ENCODE measurements at regions of chr4 and their contacts with region 1.

Region 1: DNA sequence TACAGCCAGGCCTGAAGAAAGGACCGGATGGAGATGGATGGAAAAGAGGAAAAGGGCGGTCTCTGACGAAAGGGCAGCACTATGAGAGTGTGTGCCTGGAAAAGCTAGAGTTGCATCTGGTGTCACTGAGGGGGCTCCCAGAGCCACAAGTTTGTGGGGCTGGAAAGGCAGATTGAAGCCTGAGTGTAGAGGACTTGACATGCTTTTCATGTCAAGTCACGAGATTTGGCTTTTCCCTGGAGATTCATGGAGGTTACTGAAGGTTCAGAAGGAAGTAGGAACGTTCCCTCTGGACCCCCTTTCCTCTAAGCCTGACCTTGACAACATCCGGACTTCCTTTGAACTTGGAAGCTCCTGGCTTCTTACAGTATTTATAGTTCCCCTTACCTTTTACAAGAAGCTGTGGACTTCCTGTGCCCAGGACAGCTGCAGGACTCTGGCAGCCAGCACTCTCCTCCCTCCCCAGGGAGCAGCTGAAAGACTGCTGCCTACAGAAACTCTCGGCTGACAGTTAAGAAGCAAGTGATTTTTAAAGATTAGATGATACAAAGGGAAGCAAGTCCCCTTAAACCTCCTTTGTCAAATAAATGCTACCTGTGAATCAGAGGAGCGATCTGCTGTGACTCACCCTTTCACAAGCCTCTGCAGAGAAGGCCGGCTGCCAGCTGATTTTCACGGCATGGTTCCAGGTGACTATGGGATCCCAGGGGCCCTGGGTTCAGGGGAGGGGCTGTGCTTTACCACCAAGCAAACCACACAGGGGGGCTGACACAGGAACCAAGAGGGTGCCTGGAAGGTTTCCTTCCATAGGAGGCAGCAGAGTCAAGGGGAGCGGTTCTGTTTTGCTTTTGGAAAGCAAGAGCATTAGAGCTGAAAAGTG is 72.9 kb upstream of the STIM2 start:
- DNase-seq: peak; percentile 59
- H3K4me3 Mint-ChIP-seq: no peak overlapping the region
- H3K27ac Mint-ChIP-seq: no peak overlapping the region
- H3K4me1 Mint-ChIP-seq: peaks cover 14% of the 10 kb centered on the region
- H3K27me3 Mint-ChIP-seq: no peaks in the 10 kb centered on the region

Region 2: DNA sequence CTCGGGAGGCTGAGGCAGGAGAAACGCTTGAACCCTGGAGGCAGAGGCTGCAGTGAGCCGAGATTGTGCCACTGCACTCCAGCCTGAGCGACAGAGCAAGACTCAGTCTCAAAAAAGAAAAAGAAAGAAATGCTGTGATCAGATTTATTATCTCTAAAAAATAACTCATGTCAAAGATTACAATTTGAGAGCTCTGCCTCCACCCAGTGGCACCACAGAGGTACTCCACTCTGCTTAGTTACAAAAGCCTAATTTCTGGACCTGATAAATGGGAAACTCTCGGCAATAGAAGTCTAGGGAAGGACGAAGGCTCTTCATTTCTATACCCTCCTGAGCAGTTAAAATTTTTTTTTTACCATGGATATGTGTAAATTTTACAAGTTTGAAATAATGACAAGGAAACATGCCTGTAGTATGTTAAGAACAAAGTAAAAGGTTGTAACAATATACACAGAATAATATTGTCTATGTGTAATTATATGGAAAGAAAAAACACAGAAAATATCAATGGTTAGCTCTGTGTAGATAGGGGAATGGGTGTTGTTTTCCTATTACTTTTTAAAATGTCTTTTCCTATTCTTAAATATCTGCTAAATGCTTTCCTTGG is 222.7 kb after region 1 on chr4:
- CTCF ChIA-PET with region 1: no interaction called
- POLR2A ChIA-PET with region 1: no interaction called
- intact Hi-C with region 1: loop called (anchors 1 kb)
- DNase-seq: peak; percentile 67
- H3K4me3 Mint-ChIP-seq: no peak overlapping the region
- H3K27ac Mint-ChIP-seq: no peak overlapping the region
- H3K4me1 Mint-ChIP-seq: peaks cover 18% of the 10 kb centered on the region
- H3K27me3 Mint-ChIP-seq: no peaks in the 10 kb centered on the region